ENCODE measurements at regions of chr5 and their contacts with region 1.

Region 1: DNA sequence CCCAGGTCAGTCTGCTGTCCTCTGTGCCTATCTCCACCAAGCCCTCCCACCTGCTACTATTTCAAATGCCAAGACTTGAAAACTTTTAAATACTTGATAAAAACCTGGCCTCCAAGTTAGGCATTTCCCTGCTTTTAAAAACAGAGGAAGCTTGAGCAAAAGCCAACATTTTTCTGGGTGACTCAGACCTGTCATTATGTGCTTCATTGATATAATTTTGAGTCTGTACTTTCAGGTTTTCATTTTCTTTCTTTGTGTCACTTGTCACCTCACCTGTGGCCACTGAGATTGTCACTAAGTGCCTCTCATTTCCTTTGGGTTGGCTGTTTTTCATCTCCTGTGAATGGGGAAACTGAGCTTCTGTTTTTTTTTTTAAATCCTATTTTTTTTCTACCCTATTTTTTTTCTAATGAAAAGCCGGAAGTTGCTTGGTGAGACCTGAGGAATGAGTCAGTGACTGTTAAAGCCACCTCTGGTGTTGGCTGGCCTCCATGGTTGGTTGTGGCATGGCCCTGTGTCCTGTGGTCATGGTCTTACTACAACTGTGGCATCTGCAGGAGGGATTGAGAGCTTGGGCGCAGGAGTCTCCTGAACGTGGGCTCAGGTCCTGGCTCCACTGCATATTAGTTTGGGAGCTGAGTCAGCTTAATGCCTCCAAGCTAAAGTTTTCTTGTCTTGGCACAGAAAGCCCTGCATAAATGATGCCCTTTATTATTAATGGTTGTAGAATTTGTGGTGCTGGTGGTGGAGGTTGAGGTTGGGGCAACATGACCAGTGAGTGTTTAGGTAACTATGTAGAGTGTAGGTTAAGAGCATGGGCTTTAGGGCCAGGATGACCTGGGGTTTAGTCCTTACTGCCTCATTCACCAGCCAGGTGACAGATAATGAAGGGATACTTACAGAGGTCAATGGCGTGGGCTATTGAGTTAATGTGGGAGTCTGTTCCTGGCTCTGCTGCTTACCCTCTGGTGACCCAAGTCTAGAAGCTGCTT is 56.9 kb downstream of the ARHGAP26 start:
- DNase-seq: peak; percentile 83
- H3K4me3 Mint-ChIP-seq: peak overlapping the region; percentile 35
- H3K27ac Mint-ChIP-seq: peak overlapping the region; percentile 73
- H3K4me1 Mint-ChIP-seq: peaks cover 57% of the 10 kb centered on the region
- H3K27me3 Mint-ChIP-seq: no peaks in the 10 kb centered on the region
- CTCF ChIP-seq: no peak

Region 2: GRCh38 chr5:142726188-142726731 is 100.8 kb before region 1 on chr5:
- CTCF ChIA-PET with region 1: interaction called, 4 read pairs
- POLR2A ChIA-PET with region 1: interaction called, 8 read pairs
- intact Hi-C with region 1: loop called (anchors 5 kb)
- DNase-seq: peak; percentile 93
- H3K4me3 Mint-ChIP-seq: no peak overlapping the region
- H3K27ac Mint-ChIP-seq: peak overlapping the region; percentile 86
- H3K4me1 Mint-ChIP-seq: peaks cover 28% of the 10 kb centered on the region
- H3K27me3 Mint-ChIP-seq: no peaks in the 10 kb centered on the region
- CTCF ChIP-seq: no peak

Region 3: DNA sequence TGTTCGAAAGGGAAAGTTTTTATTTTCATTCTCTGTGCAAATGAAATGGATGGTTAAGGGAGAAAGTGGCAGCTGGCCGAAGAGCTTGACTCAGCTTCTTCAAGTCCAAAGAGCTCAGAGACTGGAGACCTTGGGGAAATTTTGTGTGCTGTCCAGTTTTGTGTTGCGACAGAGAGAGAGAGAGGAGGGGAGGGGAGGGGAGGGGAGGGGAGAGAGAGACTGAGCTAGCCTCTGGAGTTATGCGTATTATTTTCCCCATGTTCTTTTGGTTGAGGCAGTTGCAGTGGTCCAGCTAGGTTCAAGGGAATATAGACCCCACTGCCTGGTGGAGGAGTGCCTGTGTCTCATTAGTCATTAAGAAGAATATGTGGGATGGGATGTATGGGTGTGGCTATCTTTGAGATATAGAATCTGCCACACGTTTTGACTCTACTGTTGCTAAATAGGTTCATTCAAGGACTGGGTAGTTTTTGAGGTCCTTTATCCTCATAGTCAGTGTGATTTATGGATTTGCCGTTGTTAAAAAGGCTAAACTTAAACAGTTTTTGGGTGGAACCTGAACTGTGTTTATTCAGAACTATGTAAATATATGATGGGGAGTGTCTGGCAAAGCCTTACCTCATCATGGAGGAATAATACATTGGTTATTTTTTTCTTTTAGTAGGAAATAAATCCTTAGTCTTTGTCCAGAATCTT is 12.8 kb after region 1 on chr5:
- CTCF ChIA-PET with region 1: interaction called, 3 read pairs
- POLR2A ChIA-PET with region 1: interaction called, 11 read pairs
- intact Hi-C with region 1: no loop called
- DNase-seq: peak; percentile 50
- H3K4me3 Mint-ChIP-seq: no peak overlapping the region
- H3K27ac Mint-ChIP-seq: no peak overlapping the region
- H3K4me1 Mint-ChIP-seq: peaks cover 5% of the 10 kb centered on the region
- H3K27me3 Mint-ChIP-seq: no peaks in the 10 kb centered on the region
- CTCF ChIP-seq: no peak

Region 4: DNA sequence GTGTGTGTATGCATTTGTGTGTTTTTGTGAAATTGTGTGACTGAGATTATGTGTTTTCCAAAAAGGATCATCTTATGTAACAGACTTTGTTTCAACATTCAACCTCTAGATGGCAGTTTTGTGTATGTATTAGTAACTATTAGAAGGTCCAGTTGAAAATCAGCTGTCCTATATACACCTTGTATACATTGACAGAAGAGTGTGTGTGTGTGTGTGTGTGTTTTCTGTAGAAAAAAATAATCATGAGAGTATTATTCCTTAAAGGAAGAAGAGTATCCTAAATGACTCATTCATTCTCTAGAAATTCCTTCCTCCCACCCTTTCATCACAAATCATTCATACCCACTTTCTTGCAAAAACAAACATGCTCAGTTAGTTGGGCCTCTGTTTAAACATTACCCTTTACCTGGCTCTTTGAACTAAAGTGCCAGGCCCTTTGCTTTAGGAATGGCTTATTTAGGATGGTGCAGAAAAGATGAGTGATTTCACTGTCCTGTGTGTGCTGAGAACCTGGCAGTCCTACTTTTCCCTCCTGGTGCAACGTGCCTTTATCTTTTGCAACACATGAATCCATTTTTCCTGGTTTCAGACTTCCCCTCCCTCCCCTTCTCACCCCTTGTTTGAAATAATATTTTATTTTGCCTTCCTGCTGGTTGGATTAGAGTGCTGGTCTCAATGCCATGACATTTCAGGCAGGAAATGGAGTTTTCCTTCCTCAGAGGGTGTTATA is 95.4 kb after region 1 on chr5:
- CTCF ChIA-PET with region 1: no interaction called
- POLR2A ChIA-PET with region 1: no interaction called
- intact Hi-C with region 1: no loop called
- DNase-seq: peak; percentile 56
- H3K4me3 Mint-ChIP-seq: no peak overlapping the region
- H3K27ac Mint-ChIP-seq: no peak overlapping the region
- H3K4me1 Mint-ChIP-seq: peaks cover 25% of the 10 kb centered on the region
- H3K27me3 Mint-ChIP-seq: no peaks in the 10 kb centered on the region
- CTCF ChIP-seq: peak; percentile 68

Measured in MCF 10A (cell line).